ENCODE measurements at regions of chr10 and their contacts with region 1.

Region 1: DNA sequence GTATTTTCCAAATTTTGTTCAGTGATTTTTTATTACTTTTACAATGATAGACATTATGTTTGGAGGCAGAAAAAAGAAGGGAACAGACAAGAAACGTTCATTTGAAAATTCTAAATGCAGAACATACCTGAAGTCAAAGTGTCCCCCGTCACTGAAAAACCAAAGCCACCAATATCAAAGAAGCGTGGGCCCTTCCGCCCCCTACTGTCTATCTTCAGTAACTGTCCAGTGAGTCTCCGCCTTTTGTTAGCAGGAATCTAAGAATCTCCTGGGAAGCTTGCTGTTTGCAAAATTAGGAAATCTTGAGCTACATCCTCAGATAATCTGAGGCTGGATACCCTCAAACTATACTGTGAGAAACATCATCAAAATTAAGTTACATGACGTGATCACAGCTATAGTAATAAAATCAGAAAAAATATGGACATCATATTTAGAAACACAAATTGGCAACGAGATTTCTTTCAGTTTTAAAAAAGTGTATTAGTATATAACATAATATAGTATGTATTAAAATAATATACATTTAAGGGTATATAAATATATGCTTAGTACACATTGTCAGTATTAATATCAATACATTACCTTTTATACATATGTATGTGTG is 169.3 kb upstream of the AKR1E2 start:
- DNase-seq: peak; percentile 64
- ATAC-seq: 0 out of 2 replicates have a peak, but pooled peaks have one; percentile 35
- H3K4me3 ChIP-seq: no peak overlapping the region
- H3K27ac ChIP-seq: peak overlapping the region; percentile 46
- H3K4me1 ChIP-seq: peaks cover 27% of the 10 kb centered on the region
- H3K27me3 ChIP-seq: no peaks in the 10 kb centered on the region
- CTCF ChIP-seq: peak; percentile 77

Region 2: GRCh38 chr10:4512671-4513240 is 143.9 kb before region 1 on chr10:
- CTCF ChIA-PET with region 1: no interaction called
- POLR2A ChIA-PET with region 1: no interaction called
- intact Hi-C with region 1: loop called (anchors 2 kb)
- DNase-seq: peak; percentile 54
- ATAC-seq: peak; percentile 58
- H3K4me3 ChIP-seq: no peak overlapping the region
- H3K27ac ChIP-seq: no peak overlapping the region
- H3K4me1 ChIP-seq: peaks cover 7% of the 10 kb centered on the region; the same call in 1 of the 2 replicates
- H3K27me3 ChIP-seq: no peaks in the 10 kb centered on the region
- CTCF ChIP-seq: peak; percentile 65

Region 3: GRCh38 chr10:4541292-4541691 is 115.4 kb before region 1 on chr10:
- CTCF ChIA-PET with region 1: no interaction called
- POLR2A ChIA-PET with region 1: no interaction called
- intact Hi-C with region 1: loop called (anchors 10 kb)
- DNase-seq: peak; percentile 88
- ATAC-seq: peak; percentile 100
- H3K4me3 ChIP-seq: no peak overlapping the region
- H3K27ac ChIP-seq: peak overlapping the region; percentile 97
- H3K4me1 ChIP-seq: peaks cover 17% of the 10 kb centered on the region
- H3K27me3 ChIP-seq: no peaks in the 10 kb centered on the region
- CTCF ChIP-seq: peak; percentile 37; the same call in 1 of the 2 replicates

Measured in PC-3 (cell line).